CD4-positive, alpha-beta memory T cell (primary cell): ENCODE measurements at regions of chr12 and their contacts with region 1.

Region 1: GRCh38 chr12:108194585-108194984 is 65.5 kb downstream of the WSCD2 start:
- DNase-seq: no peak
- H3K4me3 ChIP-seq: no peak overlapping the region
- H3K4me3 Mint-ChIP-seq: no peak overlapping the region
- H3K27ac ChIP-seq: no peak overlapping the region
- H3K27ac Mint-ChIP-seq: no peak overlapping the region
- H3K4me1 ChIP-seq: no peaks in the 10 kb centered on the region
- H3K4me1 Mint-ChIP-seq: no peaks in the 10 kb centered on the region
- H3K27me3 ChIP-seq: no peaks in the 10 kb centered on the region
- H3K27me3 Mint-ChIP-seq: peaks cover 3 to 20% of the 10 kb centered on the region in 2 donors

Region 2: DNA sequence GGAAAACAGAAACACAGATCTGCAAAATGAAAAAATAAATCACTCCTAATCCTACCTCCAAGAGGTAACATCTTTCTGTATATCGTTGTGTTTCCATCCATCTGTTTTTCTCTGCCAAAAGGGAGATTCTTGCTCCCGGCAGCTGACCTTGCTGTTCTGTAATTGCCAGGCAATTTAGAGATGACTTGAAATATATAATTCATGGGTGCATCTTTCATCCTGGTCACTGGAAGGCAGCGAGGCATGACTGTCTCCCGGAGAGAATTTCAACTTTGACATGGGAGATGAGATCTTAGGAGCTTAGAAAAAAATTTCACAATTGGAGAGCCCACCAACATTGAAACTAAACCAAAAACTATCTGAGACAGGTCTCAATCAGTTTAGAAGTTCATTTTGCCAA is 12.5 kb before region 1 on chr12:
- CTCF ChIA-PET with region 1: interaction called, 10 read pairs
- POLR2A ChIA-PET with region 1: no interaction called
- intact Hi-C with region 1: no loop called
- DNase-seq: no peak
- H3K4me3 ChIP-seq: no peak overlapping the region
- H3K4me3 Mint-ChIP-seq: no peak overlapping the region
- H3K27ac ChIP-seq: no peak overlapping the region
- H3K27ac Mint-ChIP-seq: no peak overlapping the region
- H3K4me1 ChIP-seq: no peaks in the 10 kb centered on the region
- H3K4me1 Mint-ChIP-seq: no peaks in the 10 kb centered on the region
- H3K27me3 ChIP-seq: no peaks in the 10 kb centered on the region
- H3K27me3 Mint-ChIP-seq: no peaks in the 10 kb centered on the region